ENCODE measurements at regions of chr21 and their contacts with region 1.

Region 1: DNA sequence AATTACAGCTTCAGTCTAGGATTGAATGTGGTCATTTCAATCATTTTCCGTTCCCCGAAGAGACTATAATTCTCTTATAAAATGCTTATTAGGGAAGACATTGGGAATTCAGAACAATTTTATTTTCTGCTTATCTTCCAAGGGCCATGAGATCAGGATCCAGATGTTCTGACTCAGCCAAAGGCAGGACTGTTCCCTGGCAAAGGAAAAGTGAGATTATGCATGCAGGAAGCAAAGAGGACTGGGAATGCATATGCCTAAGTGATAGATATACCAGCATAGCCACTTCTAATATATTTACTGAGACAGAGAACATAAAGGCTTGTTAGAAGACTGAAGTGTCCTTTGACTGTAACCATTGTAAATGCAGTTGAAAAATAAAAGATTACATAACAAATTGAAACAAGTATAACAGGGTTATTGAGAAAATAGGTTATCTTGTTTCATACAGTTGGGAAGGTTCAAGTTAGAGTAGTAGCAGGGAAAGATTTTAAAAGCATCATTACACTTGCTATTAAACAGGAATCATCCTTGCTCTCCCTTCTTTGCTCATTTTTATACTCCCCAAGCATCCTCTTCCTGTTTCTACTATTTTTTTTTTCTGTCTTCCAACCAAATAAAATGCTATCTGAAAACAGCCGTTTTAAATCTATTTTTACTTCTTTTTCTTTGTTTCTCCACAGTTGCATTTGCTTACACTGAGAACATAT is 439.6 kb upstream of the ADAMTS5 start:
- DNase-seq: no peak
- H3K4me3 Mint-ChIP-seq: no peak overlapping the region
- H3K27ac Mint-ChIP-seq: no peak overlapping the region
- H3K4me1 Mint-ChIP-seq: no peaks in the 10 kb centered on the region
- H3K27me3 Mint-ChIP-seq: no peaks in the 10 kb centered on the region

Region 2: DNA sequence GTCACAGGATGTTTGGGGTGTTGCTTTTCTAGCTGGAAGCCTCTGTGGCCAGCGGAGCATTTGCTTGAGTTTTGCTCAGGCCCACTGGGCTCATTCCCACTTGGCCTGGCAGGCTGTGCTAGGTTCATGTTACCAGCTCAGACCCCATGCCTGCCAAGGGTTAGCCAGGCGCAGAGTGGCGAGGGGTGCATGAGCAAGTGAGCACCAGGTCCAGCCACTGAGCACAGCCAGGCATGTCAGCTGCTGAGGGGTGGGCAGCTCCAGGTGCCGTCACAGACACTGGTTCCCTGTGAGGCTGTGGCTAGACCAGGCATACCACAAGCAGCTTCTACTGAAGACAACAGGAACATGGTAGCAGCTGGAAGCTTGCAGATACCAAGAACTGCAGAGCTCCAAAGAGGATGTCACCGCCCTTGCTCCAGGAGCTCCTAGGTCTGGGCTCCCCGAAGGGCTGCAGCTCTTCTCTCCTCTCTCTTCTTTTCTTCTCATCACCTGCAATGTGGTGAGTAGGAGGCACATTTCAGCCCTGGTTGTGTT is 781.4 kb before region 1 on chr21:
- intact Hi-C with region 1: loop called (anchors 10 kb)
- DNase-seq: no peak
- H3K4me3 Mint-ChIP-seq: no peak overlapping the region
- H3K27ac Mint-ChIP-seq: no peak overlapping the region
- H3K4me1 Mint-ChIP-seq: no peaks in the 10 kb centered on the region
- H3K27me3 Mint-ChIP-seq: no peaks in the 10 kb centered on the region